MCF 10A (cell line): ENCODE measurements at regions of chr2 and their contacts with region 1.

Region 1: GRCh38 chr2:6352906-6353515 is 512.7 kb downstream of the CMPK2 start:
- DNase-seq: peak; percentile 68
- H3K4me3 Mint-ChIP-seq: no peak overlapping the region
- H3K27ac Mint-ChIP-seq: no peak overlapping the region
- H3K4me1 Mint-ChIP-seq: no peaks in the 10 kb centered on the region
- H3K27me3 Mint-ChIP-seq: no peaks in the 10 kb centered on the region
- CTCF ChIP-seq: peak; percentile 53

Region 2: GRCh38 chr2:5328826-5329225 is 1024.2 kb before region 1 on chr2:
- CTCF ChIA-PET with region 1: no interaction called
- POLR2A ChIA-PET with region 1: no interaction called
- intact Hi-C with region 1: no loop called
- DNase-seq: no peak
- H3K4me3 Mint-ChIP-seq: no peak overlapping the region
- H3K27ac Mint-ChIP-seq: no peak overlapping the region
- H3K4me1 Mint-ChIP-seq: no peaks in the 10 kb centered on the region
- H3K27me3 Mint-ChIP-seq: no peaks in the 10 kb centered on the region
- CTCF ChIP-seq: no peak

Region 3: DNA sequence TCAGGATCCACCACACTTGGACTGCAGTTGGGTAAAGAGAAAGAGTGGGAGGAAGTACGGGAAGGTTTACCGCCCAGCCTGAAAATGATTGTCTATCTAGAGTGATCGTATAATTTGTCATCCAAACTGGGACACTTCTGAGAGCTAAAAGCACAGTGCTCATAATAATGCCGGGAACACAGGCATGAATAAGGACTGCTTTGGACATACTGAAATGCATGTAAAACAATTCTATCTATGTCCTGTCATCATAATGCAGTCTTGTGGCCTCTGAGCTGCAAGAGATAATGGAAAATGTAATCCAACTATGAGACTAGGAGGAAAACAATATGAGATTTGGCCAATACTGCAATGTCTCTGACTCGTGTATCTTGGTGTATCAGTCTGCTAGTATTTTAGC is 225.3 kb before region 1 on chr2:
- CTCF ChIA-PET with region 1: no interaction called
- POLR2A ChIA-PET with region 1: no interaction called
- intact Hi-C with region 1: no loop called
- DNase-seq: no peak
- H3K4me3 Mint-ChIP-seq: no peak overlapping the region
- H3K27ac Mint-ChIP-seq: no peak overlapping the region
- H3K4me1 Mint-ChIP-seq: no peaks in the 10 kb centered on the region
- H3K27me3 Mint-ChIP-seq: no peaks in the 10 kb centered on the region
- CTCF ChIP-seq: no peak

Region 4: DNA sequence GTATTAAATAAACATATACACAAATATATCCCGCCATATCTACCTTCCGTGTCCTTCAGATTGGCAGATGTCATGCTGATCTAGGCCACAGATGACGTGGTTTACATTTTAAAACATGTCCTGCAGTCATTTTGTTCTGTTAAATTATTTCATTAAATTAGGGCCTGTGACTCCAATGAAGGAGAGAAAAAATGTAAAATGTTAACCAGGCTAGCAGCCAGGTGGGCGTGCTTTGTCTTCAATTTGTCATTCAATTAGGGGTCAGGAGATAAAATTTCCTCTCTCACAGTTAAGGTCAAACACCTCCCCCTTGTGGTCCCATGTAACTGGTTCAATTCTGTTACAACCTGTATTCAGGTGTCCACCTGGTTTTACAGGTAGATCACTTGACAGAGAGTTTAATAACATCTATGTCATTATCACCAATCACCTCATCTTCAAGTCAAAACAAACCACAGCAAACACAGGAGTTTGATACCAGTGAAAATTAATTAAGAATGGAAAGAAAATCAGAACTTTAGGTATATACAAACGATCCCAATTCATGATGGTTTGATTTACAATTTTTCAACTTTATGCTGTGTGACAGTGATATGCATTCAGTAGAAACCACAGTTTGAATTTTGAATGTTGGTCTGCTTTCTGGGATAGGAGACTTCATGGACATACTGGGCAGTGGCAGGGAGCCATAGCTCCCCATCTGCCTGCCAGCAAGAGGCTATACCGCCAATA is 173.2 kb after region 1 on chr2:
- CTCF ChIA-PET with region 1: interaction called, 10 read pairs
- POLR2A ChIA-PET with region 1: no interaction called
- intact Hi-C with region 1: loop called (anchors 1 kb)
- DNase-seq: peak; percentile 51
- H3K4me3 Mint-ChIP-seq: no peak overlapping the region
- H3K27ac Mint-ChIP-seq: no peak overlapping the region
- H3K4me1 Mint-ChIP-seq: no peaks in the 10 kb centered on the region
- H3K27me3 Mint-ChIP-seq: no peaks in the 10 kb centered on the region
- CTCF ChIP-seq: peak; percentile 48

Region 5: DNA sequence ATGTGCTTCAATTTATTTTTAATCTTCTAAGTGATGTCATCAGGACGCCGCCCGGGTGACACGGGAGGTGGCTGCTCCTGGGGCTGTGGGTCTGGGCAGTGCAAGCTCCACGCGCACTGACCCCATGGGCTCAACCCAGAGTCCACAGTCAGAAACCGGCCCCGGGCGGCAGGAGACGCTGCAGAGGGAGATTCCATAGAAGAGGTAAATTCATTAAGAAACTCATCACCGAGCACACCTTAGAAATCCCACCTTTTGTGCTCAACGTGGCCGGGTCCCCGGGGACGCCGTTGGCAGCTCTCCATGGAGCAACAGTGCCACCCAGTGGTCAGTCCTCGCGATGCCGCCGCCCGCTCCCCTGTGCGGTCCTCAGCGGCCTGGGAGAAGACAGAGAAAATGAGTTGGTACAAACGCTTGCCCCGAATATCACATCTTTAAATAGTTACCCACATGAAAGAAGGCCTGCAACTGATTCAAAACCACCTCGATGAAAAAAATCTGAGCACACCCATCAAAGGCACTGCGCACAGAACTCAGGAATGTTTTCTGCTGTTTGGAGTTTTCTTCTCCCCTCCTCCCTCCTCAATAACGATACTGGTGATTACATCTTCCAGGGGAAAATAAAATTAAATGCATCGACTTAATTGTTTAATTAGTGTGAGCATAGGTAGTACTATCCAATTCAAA is 420.1 kb after region 1 on chr2:
- CTCF ChIA-PET with region 1: interaction called, 3 read pairs
- POLR2A ChIA-PET with region 1: no interaction called
- intact Hi-C with region 1: loop called (anchors 1 kb)
- DNase-seq: peak; percentile 41
- H3K4me3 Mint-ChIP-seq: no peak overlapping the region
- H3K27ac Mint-ChIP-seq: no peak overlapping the region
- H3K4me1 Mint-ChIP-seq: no peaks in the 10 kb centered on the region
- H3K27me3 Mint-ChIP-seq: no peaks in the 10 kb centered on the region
- CTCF ChIP-seq: peak; percentile 84

Region 6: DNA sequence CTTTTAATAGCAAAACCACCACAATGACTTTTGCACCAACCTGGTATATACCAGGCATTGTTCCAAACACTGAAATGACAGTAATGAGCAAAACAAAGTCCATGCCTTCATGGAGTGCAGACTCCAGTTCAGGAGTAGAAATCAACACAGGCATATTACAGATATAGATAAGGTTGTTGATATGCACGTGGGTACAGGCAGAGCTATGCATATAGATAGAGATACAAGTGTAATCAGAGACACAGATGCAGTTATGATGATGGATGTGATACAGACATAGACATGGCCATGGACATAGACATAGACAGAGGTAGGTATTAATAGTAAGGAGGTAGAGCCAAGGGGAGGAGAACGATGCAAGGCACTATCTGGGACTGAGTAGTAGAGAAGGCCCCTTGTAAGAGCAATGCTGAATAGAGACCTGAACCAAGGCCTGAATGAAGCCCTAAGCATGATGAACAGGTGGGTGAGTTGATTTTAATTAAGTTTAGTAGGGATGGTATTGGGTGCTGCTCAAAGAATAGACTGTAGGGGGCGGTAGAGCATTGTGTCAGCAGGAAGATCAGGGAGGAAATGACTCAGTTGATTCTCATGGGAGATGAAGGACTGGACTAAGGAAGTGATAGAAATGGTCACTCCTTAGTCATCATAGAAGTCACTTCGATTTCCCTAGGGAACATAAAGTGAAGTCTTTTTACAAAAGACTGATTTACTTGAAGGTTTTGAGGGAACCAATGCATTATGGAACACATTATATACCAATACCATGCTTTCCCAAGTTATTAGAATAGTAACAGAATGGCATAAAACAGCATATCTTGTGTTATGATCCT is 473.3 kb after region 1 on chr2:
- CTCF ChIA-PET with region 1: interaction called, 6 read pairs
- POLR2A ChIA-PET with region 1: no interaction called
- intact Hi-C with region 1: loop called (anchors 5 kb)
- DNase-seq: peak; percentile 79
- H3K4me3 Mint-ChIP-seq: no peak overlapping the region
- H3K27ac Mint-ChIP-seq: no peak overlapping the region
- H3K4me1 Mint-ChIP-seq: peaks cover 6% of the 10 kb centered on the region
- H3K27me3 Mint-ChIP-seq: no peaks in the 10 kb centered on the region
- CTCF ChIP-seq: peak; percentile 37